Lower leg skin (tissue), 4 donors: ENCODE measurements at regions of chr5 and their contacts with region 1.

Region 1: GRCh38 chr5:42467981-42468524 is 44.8 kb downstream of the GHR start:
- DNase-seq: no peak
- H3K4me3 ChIP-seq: no peak overlapping the region
- CTCF ChIP-seq: no peak
- POLR2A ChIP-seq: no peak

Region 2: DNA sequence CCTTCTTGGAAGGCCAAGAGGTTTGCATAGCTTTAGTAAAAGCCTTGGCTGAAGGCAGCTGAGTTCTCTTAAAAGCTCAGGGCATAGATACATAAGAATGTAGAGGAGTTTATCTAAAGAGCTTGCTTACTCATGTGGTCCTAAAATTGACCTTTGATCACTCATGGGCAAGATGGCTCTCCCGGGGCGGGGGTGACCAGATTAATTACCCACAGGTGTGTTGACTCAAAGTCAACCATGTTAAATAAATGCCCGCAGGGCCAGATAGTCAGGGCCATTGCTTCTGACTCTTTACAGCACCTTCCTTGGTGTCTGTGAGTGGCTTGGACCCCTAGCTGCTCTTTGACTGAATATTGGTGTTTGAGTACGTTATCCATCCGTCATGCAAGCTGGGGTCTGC is 77.9 kb before region 1 on chr5:
- intact Hi-C with region 1: no loop called
- DNase-seq: no peak
- H3K4me3 ChIP-seq: no peak overlapping the region
- CTCF ChIP-seq: no peak
- POLR2A ChIP-seq: no peak

Region 3: GRCh38 chr5:42454216-42454995 is 13.6 kb before region 1 on chr5:
- intact Hi-C with region 1: loop called (anchors 2 kb)
- DNase-seq: no peak
- H3K4me3 ChIP-seq: no peak overlapping the region
- CTCF ChIP-seq: no peak
- POLR2A ChIP-seq: no peak

Region 4: GRCh38 chr5:42889311-42889933 is 421.4 kb after region 1 on chr5:
- intact Hi-C with region 1: no loop called
- DNase-seq: peak; percentile 84 to 95
- H3K4me3 ChIP-seq: no peak overlapping the region
- CTCF ChIP-seq: peak in 1 of 3 donors; percentile 71
- POLR2A ChIP-seq: no peak